Activated CD4-positive, alpha-beta memory T cell treated with anti-CD3 and anti-CD28 coated beads for 36 hours (primary cell): ENCODE measurements at regions of chr4 and their contacts with region 1.

Region 1: GRCh38 chr4:78951862-78952472 is 12.7 kb upstream of the PAQR3 start:
- DNase-seq: peak; percentile 38
- H3K4me3 Mint-ChIP-seq: no peak overlapping the region
- H3K27ac Mint-ChIP-seq: no peak overlapping the region
- H3K4me1 Mint-ChIP-seq: peaks cover 2% of the 10 kb centered on the region
- H3K27me3 Mint-ChIP-seq: peaks cover 21% of the 10 kb centered on the region

Region 2: DNA sequence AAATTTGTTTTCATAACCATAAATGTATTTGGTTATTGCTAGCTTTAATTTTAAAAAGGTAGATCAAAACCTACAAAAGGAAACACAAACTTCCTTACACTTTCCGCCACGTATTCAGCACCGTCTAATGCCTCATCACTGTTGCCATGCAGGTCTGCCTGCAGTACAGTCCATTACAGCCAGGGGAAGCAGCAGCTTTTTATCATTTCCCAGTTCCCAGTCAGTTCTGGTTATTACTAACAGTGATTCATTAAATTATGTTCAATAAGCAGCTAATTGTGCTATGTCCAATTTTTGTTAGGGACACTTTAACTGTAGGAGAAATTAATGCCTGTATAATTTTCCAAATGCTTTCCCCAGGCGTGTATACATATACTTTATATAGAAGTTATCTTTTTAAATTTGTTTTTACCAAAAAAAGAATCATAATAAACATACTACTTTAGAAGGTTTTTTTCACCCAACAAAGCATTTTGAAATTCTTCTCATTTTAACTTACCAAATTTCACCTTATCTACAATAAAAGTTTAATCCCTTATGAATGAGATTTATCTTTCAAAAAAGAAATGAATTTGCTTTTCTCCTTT is 307.1 kb before region 1 on chr4:
- CTCF ChIA-PET with region 1: no interaction called
- POLR2A ChIA-PET with region 1: no interaction called
- intact Hi-C with region 1: no loop called
- DNase-seq: peak; percentile 57
- H3K4me3 Mint-ChIP-seq: no peak overlapping the region
- H3K27ac Mint-ChIP-seq: no peak overlapping the region
- H3K4me1 Mint-ChIP-seq: no peaks in the 10 kb centered on the region
- H3K27me3 Mint-ChIP-seq: no peaks in the 10 kb centered on the region

Region 3: GRCh38 chr4:78962597-78963115 is 10.7 kb after region 1 on chr4:
- CTCF ChIA-PET with region 1: interaction called, 11 read pairs
- POLR2A ChIA-PET with region 1: no interaction called
- intact Hi-C with region 1: no loop called
- DNase-seq: no peak
- H3K4me3 Mint-ChIP-seq: no peak overlapping the region
- H3K27ac Mint-ChIP-seq: no peak overlapping the region
- H3K4me1 Mint-ChIP-seq: no peaks in the 10 kb centered on the region
- H3K27me3 Mint-ChIP-seq: peaks cover 6% of the 10 kb centered on the region

Region 4: DNA sequence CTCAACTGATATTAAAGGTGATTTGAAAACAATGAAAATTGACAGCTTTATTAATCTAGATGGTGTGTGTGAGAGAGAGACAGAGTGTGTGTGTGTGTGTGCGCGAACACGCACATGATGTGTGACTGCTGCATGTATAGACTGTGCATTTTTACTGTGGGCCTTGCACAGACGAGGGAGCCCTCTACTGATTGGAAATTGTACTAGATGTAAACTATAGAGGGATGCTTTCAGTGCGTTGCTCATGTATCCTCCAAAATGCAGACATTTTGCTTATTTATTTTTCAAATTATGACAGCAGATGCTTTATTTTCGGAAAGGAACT is 624.4 kb after region 1 on chr4:
- CTCF ChIA-PET with region 1: interaction called, 7 read pairs
- POLR2A ChIA-PET with region 1: no interaction called
- intact Hi-C with region 1: loop called (anchors 1 kb)
- DNase-seq: no peak
- H3K4me3 Mint-ChIP-seq: no peak overlapping the region
- H3K27ac Mint-ChIP-seq: no peak overlapping the region
- H3K4me1 Mint-ChIP-seq: no peaks in the 10 kb centered on the region
- H3K27me3 Mint-ChIP-seq: peaks cover 3% of the 10 kb centered on the region